Astrocyte of the cerebellum (primary cell): ENCODE measurements at regions of chr13 and their contacts with region 1.

Region 1: DNA sequence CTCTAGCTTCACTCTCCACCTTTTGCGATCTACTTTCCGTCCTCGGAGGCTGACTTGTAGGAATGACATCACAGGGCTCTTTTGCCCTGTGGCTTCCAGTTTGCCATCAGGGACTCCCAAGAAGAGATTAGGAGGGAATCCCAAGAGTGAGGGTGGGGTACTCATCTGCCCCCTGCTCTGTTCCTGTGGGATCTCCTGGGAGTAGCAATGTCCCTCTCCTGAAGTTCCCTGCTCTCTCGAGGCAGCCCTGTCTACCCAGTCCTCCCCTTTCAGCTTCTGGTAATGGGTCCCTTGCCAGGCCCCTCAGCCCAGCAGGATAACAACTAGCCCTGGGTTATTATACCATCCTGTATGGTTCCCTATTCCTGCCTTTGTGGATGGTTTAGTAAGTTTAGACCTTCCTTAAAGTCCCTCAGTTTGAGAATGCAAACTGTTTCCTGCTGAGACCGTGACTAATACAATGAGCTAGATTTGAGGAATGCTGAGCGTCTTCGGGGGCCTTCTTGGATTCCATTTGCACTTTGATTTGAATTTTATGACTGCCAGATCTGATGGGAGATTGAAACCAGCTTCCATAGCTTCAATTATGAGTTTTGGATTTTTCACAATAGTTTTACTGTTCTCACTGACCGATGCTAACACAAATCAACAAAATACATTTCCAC is 73.7 kb upstream of the IPO5 start:
- DNase-seq: peak; percentile 87
- H3K4me3 ChIP-seq: no peak overlapping the region
- CTCF ChIP-seq: no peak

Region 2: GRCh38 chr13:97967948-97968347 is 88.2 kb after region 1 on chr13:
- in situ Hi-C with region 1: loop called (anchors 5 kb)
- DNase-seq: no peak
- H3K4me3 ChIP-seq: no peak overlapping the region
- CTCF ChIP-seq: no peak

Region 3: GRCh38 chr13:97978651-97979050 is 98.9 kb after region 1 on chr13:
- in situ Hi-C with region 1: no loop called
- DNase-seq: peak; percentile 36
- H3K4me3 ChIP-seq: peak overlapping the region; percentile 67
- CTCF ChIP-seq: no peak